Psoas muscle (tissue), 8 donors: ENCODE measurements at regions of chr7 and their contacts with region 1.

Region 1: GRCh38 chr7:74479961-74480829 is 26.5 kb downstream of the GTF2IRD1 start:
- DNase-seq: peak; percentile 90 to 96
- ATAC-seq: peak; percentile 58 to 72 (median 63)
- H3K4me3 ChIP-seq: peak overlapping the region; percentile 58
- H3K27ac ChIP-seq: peak overlapping the region; percentile 96
- H3K4me1 ChIP-seq: peaks cover 67% of the 10 kb centered on the region
- H3K27me3 ChIP-seq: no peaks in the 10 kb centered on the region
- CTCF ChIP-seq: no peak

Region 2: GRCh38 chr7:74501298-74501697 is 21.1 kb after region 1 on chr7:
- intact Hi-C with region 1: loop called in 1 of 2 experiments (anchors 2 kb)
- DNase-seq: peak; percentile 69 to 93
- ATAC-seq: peak; percentile 70 to 80 (median 72)
- H3K4me3 ChIP-seq: peak overlapping the region; percentile 26
- H3K27ac ChIP-seq: peak overlapping the region; percentile 89
- H3K4me1 ChIP-seq: peaks cover 17% of the 10 kb centered on the region
- H3K27me3 ChIP-seq: no peaks in the 10 kb centered on the region
- CTCF ChIP-seq: no peak